ENCODE measurements at regions of chr13 and their contacts with region 1.

Region 1: DNA sequence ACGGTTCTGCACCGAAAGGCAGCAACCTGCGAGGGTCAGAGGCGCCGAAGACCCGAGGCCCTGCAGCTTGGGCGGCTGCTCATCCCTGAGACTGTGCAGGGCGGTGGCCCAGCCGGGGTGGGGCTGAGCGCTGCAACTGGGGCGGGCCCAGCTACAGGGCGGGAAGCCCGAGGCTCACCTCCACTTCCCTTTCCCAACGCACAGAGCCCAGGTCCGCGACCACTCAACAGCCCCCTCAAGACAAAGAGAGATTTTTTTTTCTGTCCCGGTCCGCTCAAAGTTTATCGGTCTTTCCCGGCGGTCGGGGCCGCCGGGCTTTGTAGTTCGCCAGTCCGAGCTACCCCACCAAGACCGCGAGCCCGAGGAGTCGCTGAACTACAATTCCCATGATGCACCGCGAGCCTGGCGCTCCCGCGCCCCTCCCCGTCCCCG is 573 bp downstream of the KATNAL1 start:
- DNase-seq: peak; percentile 72 to 81
- H3K4me3 ChIP-seq: peak overlapping the region; percentile 99
- H3K27ac ChIP-seq: no peak overlapping the region
- H3K4me1 ChIP-seq: peaks cover 16% of the 10 kb centered on the region
- H3K27me3 ChIP-seq: no peaks in the 10 kb centered on the region
- CTCF ChIP-seq: no peak

Region 2: GRCh38 chr13:30181888-30182651 is 124.7 kb before region 1 on chr13:
- CTCF ChIA-PET with region 1: no interaction called
- POLR2A ChIA-PET with region 1: no interaction called
- intact Hi-C with region 1: no loop called
- DNase-seq: no peak
- H3K4me3 ChIP-seq: no peak overlapping the region
- H3K27ac ChIP-seq: no peak overlapping the region
- H3K4me1 ChIP-seq: no peaks in the 10 kb centered on the region
- H3K27me3 ChIP-seq: no peaks in the 10 kb centered on the region
- CTCF ChIP-seq: no peak

Region 3: GRCh38 chr13:30341815-30342570 is 35.2 kb after region 1 on chr13:
- CTCF ChIA-PET with region 1: no interaction called
- POLR2A ChIA-PET with region 1: no interaction called
- intact Hi-C with region 1: loop called (anchors 2 kb)
- DNase-seq: peak; percentile 70 to 86
- H3K4me3 ChIP-seq: peak overlapping the region; percentile 1; the same call in 1 of the 2 replicates
- H3K27ac ChIP-seq: no peak overlapping the region
- H3K4me1 ChIP-seq: peaks cover 60% of the 10 kb centered on the region
- H3K27me3 ChIP-seq: no peaks in the 10 kb centered on the region
- CTCF ChIP-seq: no peak